H1 (cell line): ENCODE measurements at regions of chr19 and their contacts with region 1.

Region 1: GRCh38 chr19:12672744-12673143 is 6.1 kb downstream of the WDR83 start:
- DNase-seq: no peak
- H3K4me3 ChIP-seq: no peak overlapping the region
- H3K27ac ChIP-seq: no peak overlapping the region
- H3K4me1 ChIP-seq: peaks cover 0 to 7% (median 2%) of the 10 kb centered on the region in 4 experiments; a peak in 4 of 7 replicates
- H3K27me3 ChIP-seq: no peaks in the 10 kb centered on the region
- CTCF ChIP-seq: peak in 2 of 3 experiments; percentile 26 to 49; a peak in 2 of 4 replicates
- EP300 ChIP-seq: no peak
- POLR2A ChIP-seq: peak in 1 of 2 experiments; percentile 55; a peak in 1 of 3 replicates
- RAD21 ChIP-seq: 0 out of 4 replicates have a peak, but pooled peaks of 1 of the 2 experiments have one; percentile 5

Region 2: GRCh38 chr19:12495002-12495802 is 177.5 kb before region 1 on chr19:
- CTCF ChIA-PET with region 1: no interaction called
- POLR2A ChIA-PET with region 1: no interaction called
- DNase-seq: peak; percentile 83 to 92
- H3K4me3 ChIP-seq: peak overlapping the region; percentile 45 to 71 (median 58)
- H3K27ac ChIP-seq: peak overlapping the region; percentile 31; the same call in 1 of the 2 replicates
- H3K4me1 ChIP-seq: no peaks in the 10 kb centered on the region; a peak in 1 of 7 replicates
- H3K27me3 ChIP-seq: no peaks in the 10 kb centered on the region
- CTCF ChIP-seq: peak; percentile 50 to 61 (median 60)
- EP300 ChIP-seq: peak in 1 of 2 experiments; percentile 48; a peak in 1 of 3 replicates
- POLR2A ChIP-seq: peak; percentile 70 to 89
- RAD21 ChIP-seq: peak; percentile 31 to 48; a peak in 3 of 4 replicates

Region 3: DNA sequence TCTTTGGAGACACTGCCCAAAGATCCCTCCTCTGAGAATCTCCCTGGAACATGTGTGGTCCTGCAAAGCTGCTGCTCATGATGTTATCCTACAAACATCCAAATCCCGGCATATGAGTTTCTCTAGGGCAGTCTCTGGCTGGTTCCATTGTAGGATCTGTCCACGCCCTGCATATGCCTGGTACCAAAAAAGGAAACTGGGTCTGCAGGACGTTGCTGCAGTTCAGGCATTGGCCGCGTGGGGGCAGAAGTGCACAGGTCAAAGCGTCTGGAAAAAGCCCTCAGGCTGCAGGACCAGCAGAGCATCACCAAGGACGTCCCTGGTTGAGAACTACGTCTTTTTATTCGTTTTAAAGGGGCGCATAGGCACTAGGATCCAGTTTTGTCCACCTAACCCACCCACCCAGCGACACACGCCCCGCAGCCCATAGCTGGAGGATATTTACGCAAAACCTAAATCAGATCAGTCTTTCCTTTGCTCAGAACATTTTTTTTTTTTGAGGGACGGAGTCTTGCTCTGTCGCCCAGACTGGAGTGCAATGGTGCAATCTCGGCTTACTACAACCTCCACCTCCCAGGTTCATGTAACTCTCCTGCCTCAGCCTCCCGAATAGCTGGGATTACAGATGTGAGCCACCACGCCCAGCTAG is 108.6 kb before region 1 on chr19:
- CTCF ChIA-PET with region 1: interaction called, 14 read pairs
- POLR2A ChIA-PET with region 1: interaction called, 4 read pairs
- DNase-seq: peak; percentile 77 to 99
- H3K4me3 ChIP-seq: no peak overlapping the region
- H3K27ac ChIP-seq: no peak overlapping the region
- H3K4me1 ChIP-seq: no peaks in the 10 kb centered on the region
- H3K27me3 ChIP-seq: no peaks in the 10 kb centered on the region
- CTCF ChIP-seq: peak; percentile 94 to 99 (median 96)
- EP300 ChIP-seq: no peak
- POLR2A ChIP-seq: no peak
- RAD21 ChIP-seq: peak; percentile 95 to 96

Region 4: GRCh38 chr19:12639901-12640613 is 32.7 kb before region 1 on chr19:
- CTCF ChIA-PET with region 1: interaction called, 12 read pairs
- POLR2A ChIA-PET with region 1: interaction called, 3 read pairs
- DNase-seq: peak; percentile 77 to 93
- H3K4me3 ChIP-seq: peak overlapping the region; percentile 11 to 53 (median 42); a peak in 6 of 8 replicates
- H3K27ac ChIP-seq: no peak overlapping the region
- H3K4me1 ChIP-seq: no peaks in the 10 kb centered on the region; a peak in 2 of 7 replicates
- H3K27me3 ChIP-seq: no peaks in the 10 kb centered on the region
- CTCF ChIP-seq: peak; percentile 75 to 99 (median 94)
- EP300 ChIP-seq: no peak
- POLR2A ChIP-seq: peak in 1 of 2 experiments; percentile 56; a peak in 1 of 3 replicates
- RAD21 ChIP-seq: peak; percentile 56 to 65

Region 5: GRCh38 chr19:12656899-12657571 is 15.7 kb before region 1 on chr19:
- CTCF ChIA-PET with region 1: interaction called, 10 read pairs
- POLR2A ChIA-PET with region 1: interaction called, 7 read pairs
- DNase-seq: peak; percentile 91 to 95
- H3K4me3 ChIP-seq: peak overlapping the region in 1 of 4 experiments; percentile 20; a peak in 3 of 8 replicates
- H3K27ac ChIP-seq: no peak overlapping the region; the same call in 1 of the 2 replicates
- H3K4me1 ChIP-seq: peaks cover 0 to 6% (median 3%) of the 10 kb centered on the region in 4 experiments; a peak in 5 of 7 replicates
- H3K27me3 ChIP-seq: no peaks in the 10 kb centered on the region
- CTCF ChIP-seq: peak; percentile 49 to 67 (median 54)
- EP300 ChIP-seq: no peak
- POLR2A ChIP-seq: no peak
- RAD21 ChIP-seq: peak; percentile 50 to 55; a peak in 3 of 4 replicates

Region 6: GRCh38 chr19:12687496-12688196 is 14.9 kb after region 1 on chr19 and contains the start of gene GNG14:
- CTCF ChIA-PET with region 1: interaction called, 20 read pairs
- POLR2A ChIA-PET with region 1: interaction called, 93 read pairs
- DNase-seq: no peak
- H3K4me3 ChIP-seq: no peak within 1 kb of the TSS
- H3K27ac ChIP-seq: no peak within 1 kb of the TSS
- H3K4me1 ChIP-seq: peaks cover 0 to 2% (median 0%) of the 10 kb centered on the region in 4 experiments; a peak in 1 of 7 replicates
- H3K27me3 ChIP-seq: no peaks in the 10 kb centered on the region
- CTCF ChIP-seq: peak in 1 of 3 experiments; percentile 20; a peak in 1 of 4 replicates
- EP300 ChIP-seq: no peak
- POLR2A ChIP-seq: no peak
- RAD21 ChIP-seq: no peak
- total RNA-seq, gene GNG14: not detected in 2 replicates